IMR-90 (cell line): ENCODE measurements at regions of chr2 and their contacts with region 1.

Region 1: DNA sequence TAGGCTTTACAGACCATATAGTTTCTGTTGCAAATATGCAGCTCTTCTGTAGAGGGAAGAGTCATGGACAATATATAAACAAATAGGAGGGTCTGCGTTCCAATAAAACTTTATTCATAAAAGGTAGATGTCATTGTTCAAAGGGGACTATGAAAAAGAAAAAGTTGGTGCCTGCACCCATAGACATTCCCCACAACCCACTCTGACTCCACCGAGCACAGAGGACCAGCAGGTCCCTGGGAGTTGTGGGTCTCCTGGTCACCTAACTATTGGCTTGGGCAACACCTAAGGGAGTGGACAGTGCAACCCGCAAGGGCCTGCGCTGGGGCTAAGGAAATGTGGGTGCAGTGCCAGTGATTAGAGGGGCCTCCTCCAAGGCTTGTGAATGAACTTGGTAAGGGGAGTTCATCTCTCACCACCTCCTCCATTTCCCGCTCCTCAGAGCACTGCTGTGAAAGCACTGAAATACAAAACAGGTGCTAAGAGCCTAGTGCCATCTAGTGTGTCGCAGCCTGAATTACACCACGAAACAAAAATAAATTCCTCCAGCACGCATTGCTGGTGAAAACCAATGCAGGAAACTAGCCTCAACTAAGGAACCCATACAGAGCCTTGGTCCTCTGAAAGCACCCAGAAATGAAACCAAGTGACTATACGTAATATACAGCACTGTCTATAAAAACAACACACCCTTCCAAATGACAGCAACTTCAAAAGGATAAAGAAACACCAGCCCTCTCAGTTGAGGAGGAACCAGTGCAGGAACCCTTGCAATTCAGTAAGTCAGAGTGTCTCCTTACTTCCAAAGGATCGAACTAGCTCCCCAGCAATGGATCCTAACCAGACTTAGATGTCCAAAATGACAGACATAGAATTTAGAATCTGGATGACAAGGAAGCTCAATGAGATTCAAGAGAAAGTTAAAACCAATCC is 166.6 kb downstream of the RNF144A start:
- DNase-seq: peak; percentile 25
- ATAC-seq: peak; percentile 66; the same call in 1 of the 2 replicates
- H3K4me3 ChIP-seq: no peak overlapping the region
- H3K27ac ChIP-seq: no peak overlapping the region
- H3K4me1 ChIP-seq: no peaks in the 10 kb centered on the region
- H3K27me3 ChIP-seq: no peaks in the 10 kb centered on the region
- CTCF ChIP-seq: peak; percentile 54
- POLR2A ChIP-seq: no peak
- RAD21 ChIP-seq: peak; percentile 44

Region 2: GRCh38 chr2:6896930-6897759 is 186.7 kb before region 1 on chr2:
- CTCF ChIA-PET with region 1: no interaction called
- POLR2A ChIA-PET with region 1: no interaction called
- dilution Hi-C with region 1: no loop called
- in situ Hi-C with region 1: no loop called
- intact Hi-C with region 1: loop called (anchors 5 kb)
- DNase-seq: peak; percentile 10
- ATAC-seq: no peak
- H3K4me3 ChIP-seq: no peak overlapping the region
- H3K27ac ChIP-seq: no peak overlapping the region
- H3K4me1 ChIP-seq: no peaks in the 10 kb centered on the region
- H3K27me3 ChIP-seq: no peaks in the 10 kb centered on the region
- CTCF ChIP-seq: peak; percentile 40
- POLR2A ChIP-seq: no peak
- RAD21 ChIP-seq: 0 out of 2 replicates have a peak, but pooled peaks have one; percentile 27